CD4-positive, alpha-beta memory T cell (primary cell): ENCODE measurements at regions of chr6 and their contacts with region 1.

Region 1: DNA sequence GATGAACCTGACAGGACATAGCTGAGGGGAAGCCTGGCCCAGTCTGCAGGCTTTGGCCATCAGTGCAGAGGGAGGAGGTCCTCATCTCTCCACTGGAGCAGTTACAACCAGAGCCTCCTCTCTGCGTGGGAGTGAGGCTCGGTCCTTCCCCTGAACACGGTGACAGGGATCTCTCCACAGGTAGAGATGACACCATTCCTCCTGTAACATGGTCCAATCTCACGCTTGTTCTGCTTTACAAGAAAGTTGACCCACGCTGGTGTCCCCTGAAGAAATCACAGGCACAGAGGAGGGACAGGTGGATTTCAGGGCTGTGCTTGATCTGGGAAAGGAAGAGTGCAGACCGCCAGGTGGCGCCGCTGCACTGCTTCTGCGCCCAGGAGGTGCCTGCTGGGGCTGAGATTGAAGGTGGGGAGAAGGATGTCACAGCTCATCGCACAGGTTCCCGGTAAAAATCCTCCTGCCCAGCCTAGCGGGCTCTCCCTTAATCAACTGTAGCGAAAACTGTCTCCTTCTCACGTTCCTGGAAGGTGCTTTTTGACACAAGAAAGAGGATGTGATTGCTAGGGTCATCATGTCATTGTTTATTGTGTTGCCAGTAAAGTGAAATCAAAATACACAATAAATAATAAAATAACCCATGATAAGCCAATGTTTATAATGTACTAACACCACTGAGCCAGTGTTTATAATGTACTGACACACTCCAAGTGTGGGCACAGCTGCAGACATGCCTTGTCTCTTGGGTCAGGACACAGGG is 20.4 kb downstream of the HLA-G start:
- DNase-seq: peak; percentile 73 to 83 (median 79)
- H3K4me3 ChIP-seq: no peak overlapping the region
- H3K4me3 Mint-ChIP-seq: peak overlapping the region in 2 of 8 donors; percentile 29 to 61
- H3K27ac ChIP-seq: no peak overlapping the region
- H3K27ac Mint-ChIP-seq: no peak overlapping the region
- H3K4me1 ChIP-seq: no peaks in the 10 kb centered on the region
- H3K4me1 Mint-ChIP-seq: peaks cover 9 to 16% (median 14%) of the 10 kb centered on the region in 4 donors
- H3K27me3 ChIP-seq: peaks cover 22% of the 10 kb centered on the region
- H3K27me3 Mint-ChIP-seq: peaks cover 25 to 47% of the 10 kb centered on the region in 2 donors

Region 2: DNA sequence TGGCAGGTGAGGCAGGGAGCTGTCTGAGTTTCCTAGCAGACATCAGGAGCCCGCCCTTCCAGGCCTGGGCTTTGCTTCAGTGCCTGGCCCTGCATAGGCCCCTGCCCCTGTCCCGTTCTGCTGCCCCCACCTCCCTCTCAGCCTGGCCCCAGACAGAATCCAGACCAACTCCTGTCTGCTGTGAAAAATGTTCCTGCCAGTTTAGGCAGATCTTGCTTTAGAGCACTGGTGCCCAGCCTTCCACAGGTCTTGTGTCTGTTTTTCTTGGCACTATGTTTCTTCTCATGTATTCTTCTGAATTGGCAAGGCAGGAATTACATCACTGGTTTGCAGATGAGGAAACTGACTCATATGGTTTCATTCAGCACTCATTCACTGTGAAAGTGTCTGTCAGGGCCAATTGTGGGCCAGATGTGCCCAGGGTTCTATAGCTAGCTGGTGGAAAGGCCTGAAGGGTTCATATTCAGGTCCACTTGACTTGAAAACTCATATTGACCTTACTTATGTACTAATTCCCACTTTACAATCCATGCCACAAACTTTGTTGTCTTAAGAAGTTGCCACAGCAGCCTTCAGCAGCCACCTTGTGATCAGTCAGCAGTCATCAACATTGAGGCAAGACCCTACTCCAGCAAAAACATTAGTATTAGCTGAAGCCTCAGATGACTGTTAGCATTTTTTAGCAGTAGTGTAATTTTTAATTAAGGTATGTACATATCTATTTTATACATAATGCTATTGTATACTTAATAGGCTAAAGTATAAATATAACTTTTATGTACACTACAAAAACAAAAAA is 84.4 kb before region 1 on chr6:
- CTCF ChIA-PET with region 1: no interaction called
- POLR2A ChIA-PET with region 1: no interaction called
- intact Hi-C with region 1: no loop called
- DNase-seq: no peak
- H3K4me3 ChIP-seq: no peak overlapping the region
- H3K4me3 Mint-ChIP-seq: no peak overlapping the region
- H3K27ac ChIP-seq: no peak overlapping the region
- H3K27ac Mint-ChIP-seq: peak overlapping the region in 1 of 7 donors; percentile 47
- H3K4me1 ChIP-seq: no peaks in the 10 kb centered on the region
- H3K4me1 Mint-ChIP-seq: peaks cover 0 to 7% (median 4%) of the 10 kb centered on the region in 4 donors
- H3K27me3 ChIP-seq: no peaks in the 10 kb centered on the region
- H3K27me3 Mint-ChIP-seq: no peaks in the 10 kb centered on the region

Region 3: DNA sequence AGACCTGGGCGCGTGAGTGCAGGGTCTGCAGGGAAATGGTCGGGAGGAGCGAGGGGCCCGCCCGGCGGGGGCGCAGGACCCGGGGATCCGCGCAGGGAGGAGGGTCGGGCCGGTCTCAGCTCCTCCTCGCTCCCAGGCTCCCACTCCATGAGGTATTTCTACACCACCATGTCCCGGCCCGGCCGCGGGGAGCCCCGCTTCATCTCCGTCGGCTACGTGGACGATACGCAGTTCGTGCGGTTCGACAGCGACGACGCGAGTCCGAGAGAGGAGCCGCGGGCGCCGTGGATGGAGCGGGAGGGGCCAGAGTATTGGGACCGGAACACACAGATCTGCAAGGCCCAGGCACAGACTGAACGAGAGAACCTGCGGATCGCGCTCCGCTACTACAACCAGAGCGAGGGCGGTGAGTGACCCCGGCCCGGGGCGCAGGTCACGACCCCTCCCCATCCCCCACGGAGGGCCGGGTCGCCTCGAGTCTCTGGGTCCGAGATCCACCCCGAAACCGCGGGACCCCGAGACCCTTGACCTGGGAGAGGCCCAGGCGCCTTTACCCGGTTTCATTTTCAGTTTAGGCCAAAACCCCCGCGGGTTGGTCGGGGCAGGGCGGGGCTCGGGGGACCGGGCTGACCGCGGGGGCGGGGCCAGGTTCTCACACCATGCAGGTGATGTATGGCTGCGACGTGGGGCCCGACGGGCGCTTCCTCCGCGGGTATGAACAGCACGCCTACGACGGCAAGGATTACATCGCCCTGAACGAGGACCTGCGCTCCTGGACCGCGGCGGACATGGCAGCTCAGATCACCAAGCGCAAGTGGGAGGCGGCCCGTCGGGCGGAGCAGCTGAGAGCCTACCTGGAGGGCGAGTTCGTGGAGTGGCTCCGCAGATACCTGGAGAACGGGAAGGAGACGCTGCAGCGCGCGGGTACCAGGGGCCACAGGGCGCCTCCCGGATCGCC is 40.0 kb after region 1 on chr6:
- CTCF ChIA-PET with region 1: no interaction called
- POLR2A ChIA-PET with region 1: no interaction called
- intact Hi-C with region 1: loop called (anchors 1 kb)
- DNase-seq: peak; percentile 69 to 96 (median 83)
- H3K4me3 ChIP-seq: peak overlapping the region; percentile 6 to 60
- H3K4me3 Mint-ChIP-seq: peak overlapping the region; percentile 41 to 96 (median 90)
- H3K27ac ChIP-seq: peak overlapping the region; percentile 91
- H3K27ac Mint-ChIP-seq: peak overlapping the region in 6 of 7 donors; percentile 92 to 99 (median 97)
- H3K4me1 ChIP-seq: peaks cover 15% of the 10 kb centered on the region
- H3K4me1 Mint-ChIP-seq: peaks cover 0 to 69% (median 14%) of the 10 kb centered on the region in 4 donors
- H3K27me3 ChIP-seq: no peaks in the 10 kb centered on the region
- H3K27me3 Mint-ChIP-seq: no peaks in the 10 kb centered on the region

Region 4: DNA sequence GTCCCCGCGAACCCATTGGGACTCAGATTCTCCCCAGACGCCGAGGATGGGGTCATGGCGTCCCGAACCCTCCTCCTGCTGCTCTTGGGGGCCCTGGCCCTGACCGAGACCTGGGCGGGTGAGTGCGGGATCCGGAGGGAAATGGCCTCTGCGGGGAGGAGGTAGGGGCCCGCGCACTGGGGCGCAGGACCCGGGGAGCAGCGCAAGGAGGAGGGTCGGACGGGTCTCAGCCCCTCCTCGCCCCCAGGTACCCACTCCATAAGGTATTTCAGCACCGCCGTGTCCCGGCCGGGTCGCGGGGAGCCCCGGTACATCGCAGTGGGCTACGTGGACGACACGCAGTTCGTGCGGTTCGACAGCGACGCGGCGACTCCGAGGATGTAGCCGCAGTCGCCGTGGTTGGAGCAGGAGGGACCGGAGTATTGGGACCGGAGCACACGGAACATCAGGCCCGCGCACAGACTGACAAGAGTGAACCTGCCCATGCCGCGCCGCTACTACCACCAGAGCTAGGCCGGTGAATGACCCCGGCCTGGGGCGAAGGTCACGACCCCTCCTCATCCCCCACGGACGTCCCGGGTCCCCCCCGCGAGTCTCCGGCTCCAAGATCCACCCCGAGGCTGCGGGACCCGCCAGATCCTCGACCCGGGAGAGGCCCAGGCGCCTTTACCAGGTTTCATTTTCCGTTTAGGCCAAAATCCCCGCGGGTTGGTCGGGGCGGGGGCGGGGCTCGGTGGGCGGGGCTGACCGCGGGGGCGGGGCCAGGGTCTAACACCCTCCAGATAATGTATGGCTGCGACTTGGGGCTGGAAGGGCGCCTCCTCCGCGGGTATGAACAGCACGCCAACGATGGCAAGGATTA is 78.6 kb after region 1 on chr6:
- CTCF ChIA-PET with region 1: no interaction called
- POLR2A ChIA-PET with region 1: interaction called, 3 read pairs
- intact Hi-C with region 1: loop called (anchors 5 kb)
- DNase-seq: peak; percentile 75 to 95 (median 80)
- H3K4me3 ChIP-seq: peak overlapping the region; percentile 6 to 70
- H3K4me3 Mint-ChIP-seq: peak overlapping the region in 7 of 8 donors; percentile 90 to 97 (median 95)
- H3K27ac ChIP-seq: peak overlapping the region; percentile 99
- H3K27ac Mint-ChIP-seq: peak overlapping the region in 6 of 7 donors; percentile 84 to 100 (median 99)
- H3K4me1 ChIP-seq: peaks cover 15% of the 10 kb centered on the region
- H3K4me1 Mint-ChIP-seq: peaks cover 0 to 28% (median 11%) of the 10 kb centered on the region in 4 donors
- H3K27me3 ChIP-seq: no peaks in the 10 kb centered on the region
- H3K27me3 Mint-ChIP-seq: no peaks in the 10 kb centered on the region

Region 5: DNA sequence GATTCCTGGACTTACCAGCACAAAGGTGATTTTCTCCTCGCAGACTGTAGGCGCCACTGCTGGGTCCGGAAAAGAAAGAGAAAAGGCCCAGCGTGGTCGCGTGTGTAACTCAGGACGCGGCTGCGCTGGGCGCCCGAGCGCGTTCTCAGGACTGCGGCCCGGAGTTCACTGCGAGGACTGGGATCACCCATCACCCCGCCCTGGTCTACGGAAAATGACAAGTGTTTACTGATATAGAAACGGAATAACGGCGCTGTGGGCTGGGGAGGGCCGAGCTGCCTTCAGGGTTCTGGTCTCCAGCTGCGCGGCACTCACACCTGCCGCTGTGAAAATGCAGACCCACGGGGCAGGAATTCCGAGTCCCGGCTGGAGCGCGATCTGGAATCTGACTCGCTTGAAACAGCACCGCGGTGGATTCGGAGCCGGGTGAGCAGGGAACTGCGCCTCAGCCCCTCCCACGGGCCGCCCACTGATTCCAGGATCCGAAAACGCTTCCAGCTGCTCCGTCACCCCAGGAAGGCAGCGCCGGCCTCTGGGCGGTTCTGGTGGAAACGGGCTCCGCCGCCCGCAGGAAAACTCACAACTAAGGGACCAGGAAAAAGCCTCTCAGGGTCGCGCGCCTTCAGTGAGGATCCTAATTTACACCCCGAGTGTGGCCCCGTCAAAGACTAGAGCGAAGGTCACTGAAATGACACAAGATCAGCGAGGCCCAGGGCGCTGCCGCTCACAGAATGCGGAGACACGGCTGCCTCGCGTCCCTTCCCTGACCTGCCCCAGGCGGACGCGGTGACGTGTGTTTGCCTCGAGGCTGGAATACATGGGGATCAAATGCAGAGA is 128.8 kb after region 1 on chr6:
- CTCF ChIA-PET with region 1: interaction called, 36 read pairs
- POLR2A ChIA-PET with region 1: interaction called, 4 read pairs
- intact Hi-C with region 1: no loop called
- DNase-seq: peak; percentile 41 to 60 (median 55)
- H3K4me3 ChIP-seq: peak overlapping the region; percentile 52 to 54
- H3K4me3 Mint-ChIP-seq: peak overlapping the region; percentile 87 to 96 (median 94)
- H3K27ac ChIP-seq: no peak overlapping the region
- H3K27ac Mint-ChIP-seq: peak overlapping the region in 5 of 7 donors; percentile 29 to 88 (median 74)
- H3K4me1 ChIP-seq: peaks cover 25% of the 10 kb centered on the region
- H3K4me1 Mint-ChIP-seq: peaks cover 30 to 34% (median 31%) of the 10 kb centered on the region in 4 donors
- H3K27me3 ChIP-seq: peaks cover 17% of the 10 kb centered on the region
- H3K27me3 Mint-ChIP-seq: peaks cover 22 to 41% of the 10 kb centered on the region in 2 donors

Region 6: GRCh38 chr6:30013291-30013922 is 165.4 kb after region 1 on chr6:
- CTCF ChIA-PET with region 1: interaction called, 37 read pairs
- POLR2A ChIA-PET with region 1: interaction called, 3 read pairs
- intact Hi-C with region 1: loop called (anchors 1 kb)
- DNase-seq: peak; percentile 12 to 41 (median 32)
- H3K4me3 ChIP-seq: no peak overlapping the region
- H3K4me3 Mint-ChIP-seq: no peak overlapping the region
- H3K27ac ChIP-seq: no peak overlapping the region
- H3K27ac Mint-ChIP-seq: no peak overlapping the region
- H3K4me1 ChIP-seq: no peaks in the 10 kb centered on the region
- H3K4me1 Mint-ChIP-seq: no peaks in the 10 kb centered on the region
- H3K27me3 ChIP-seq: peaks cover 2% of the 10 kb centered on the region
- H3K27me3 Mint-ChIP-seq: peaks cover 6 to 14% of the 10 kb centered on the region in 2 donors

Region 7: GRCh38 chr6:30061092-30061857 is 213.2 kb after region 1 on chr6 and contains the start of gene POLR1H:
- CTCF ChIA-PET with region 1: interaction called, 5 read pairs
- POLR2A ChIA-PET with region 1: no interaction called
- intact Hi-C with region 1: loop called (anchors 1 kb)
- DNase-seq: peak; percentile 87 to 93 (median 88)
- H3K4me3 ChIP-seq: peak within 1 kb of the TSS; percentile 62 to 96
- H3K4me3 Mint-ChIP-seq: peak within 1 kb of the TSS; percentile 96 to 99 (median 98)
- H3K27ac ChIP-seq: peak within 1 kb of the TSS; percentile 92
- H3K27ac Mint-ChIP-seq: peak within 1 kb of the TSS; percentile 97 to 100 (median 99)
- H3K4me1 ChIP-seq: peaks cover 41% of the 10 kb centered on the region
- H3K4me1 Mint-ChIP-seq: peaks cover 16 to 49% (median 29%) of the 10 kb centered on the region in 4 donors
- H3K27me3 ChIP-seq: no peaks in the 10 kb centered on the region
- H3K27me3 Mint-ChIP-seq: no peaks in the 10 kb centered on the region
- total RNA-seq, gene POLR1H: 47.2 to 50.0 TPM

Region 8: GRCh38 chr6:30130887-30131862 is 283.1 kb after region 1 on chr6:
- CTCF ChIA-PET with region 1: interaction called, 13 read pairs
- POLR2A ChIA-PET with region 1: no interaction called
- intact Hi-C with region 1: loop called (anchors 1 kb)
- DNase-seq: peak; percentile 74 to 80 (median 79)
- H3K4me3 ChIP-seq: no peak overlapping the region
- H3K4me3 Mint-ChIP-seq: peak overlapping the region in 5 of 8 donors; percentile 17 to 35 (median 21)
- H3K27ac ChIP-seq: no peak overlapping the region
- H3K27ac Mint-ChIP-seq: peak overlapping the region in 3 of 7 donors; percentile 0 to 33 (median 3)
- H3K4me1 ChIP-seq: peaks cover 7% of the 10 kb centered on the region
- H3K4me1 Mint-ChIP-seq: peaks cover 4 to 9% (median 5%) of the 10 kb centered on the region in 4 donors
- H3K27me3 ChIP-seq: peaks cover 34% of the 10 kb centered on the region
- H3K27me3 Mint-ChIP-seq: peaks cover 34 to 41% of the 10 kb centered on the region in 2 donors

Region 9: GRCh38 chr6:30163090-30163917 is 315.3 kb after region 1 on chr6 and contains the start of gene TRIM15:
- CTCF ChIA-PET with region 1: no interaction called
- POLR2A ChIA-PET with region 1: no interaction called
- intact Hi-C with region 1: no loop called
- DNase-seq: peak in 2 of 5 donors; percentile 24 to 49
- H3K4me3 ChIP-seq: no peak within 1 kb of the TSS
- H3K4me3 Mint-ChIP-seq: peak within 1 kb of the TSS in 5 of 8 donors; percentile 11 to 51 (median 41)
- H3K27ac ChIP-seq: no peak within 1 kb of the TSS
- H3K27ac Mint-ChIP-seq: peak within 1 kb of the TSS in 1 of 7 donors; percentile 67
- H3K4me1 ChIP-seq: peaks cover 12% of the 10 kb centered on the region
- H3K4me1 Mint-ChIP-seq: peaks cover 10 to 21% (median 14%) of the 10 kb centered on the region in 4 donors
- H3K27me3 ChIP-seq: no peaks in the 10 kb centered on the region
- H3K27me3 Mint-ChIP-seq: peaks cover 2 to 13% of the 10 kb centered on the region in 2 donors
- total RNA-seq, gene TRIM15: not detected